MCF 10A (cell line): ENCODE measurements at regions of chr5 and their contacts with region 1.

Region 1: GRCh38 chr5:170267431-170268152 is 30.0 kb downstream of the LCP2 start:
- DNase-seq: peak; percentile 90
- H3K4me3 Mint-ChIP-seq: no peak overlapping the region
- H3K27ac Mint-ChIP-seq: no peak overlapping the region
- H3K4me1 Mint-ChIP-seq: peaks cover 6% of the 10 kb centered on the region
- H3K27me3 Mint-ChIP-seq: peaks cover 47% of the 10 kb centered on the region
- CTCF ChIP-seq: peak; percentile 91

Region 2: GRCh38 chr5:170247363-170247762 is 20.2 kb before region 1 on chr5:
- CTCF ChIA-PET with region 1: interaction called, 12 read pairs
- POLR2A ChIA-PET with region 1: interaction called, 7 read pairs
- intact Hi-C with region 1: no loop called
- DNase-seq: no peak
- H3K4me3 Mint-ChIP-seq: no peak overlapping the region
- H3K27ac Mint-ChIP-seq: no peak overlapping the region
- H3K4me1 Mint-ChIP-seq: peaks cover 5% of the 10 kb centered on the region
- H3K27me3 Mint-ChIP-seq: no peaks in the 10 kb centered on the region
- CTCF ChIP-seq: no peak

Region 3: DNA sequence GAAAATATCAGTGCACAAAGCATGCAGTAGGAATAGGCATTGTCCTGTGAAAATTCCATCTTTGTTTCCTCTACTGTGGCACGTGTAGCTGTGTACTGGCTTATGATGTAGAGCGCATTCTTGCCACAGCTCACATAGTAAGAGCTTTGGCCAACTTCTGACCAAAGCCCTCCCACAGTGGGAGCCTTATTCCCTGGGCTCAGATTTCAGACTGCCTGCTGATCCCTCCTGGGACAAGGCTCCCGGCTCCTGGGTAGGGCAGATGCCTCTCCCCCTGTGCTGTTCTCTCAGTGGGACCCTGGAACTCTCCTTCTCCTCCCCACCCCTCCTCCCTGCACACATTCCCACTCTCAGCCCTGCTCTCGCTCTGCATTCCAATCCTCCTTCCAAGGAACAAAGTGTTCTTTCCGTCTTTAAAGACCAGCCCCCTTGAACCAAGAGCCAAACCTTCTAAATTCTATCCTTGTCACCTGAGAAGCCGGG is 12.5 kb after region 1 on chr5:
- CTCF ChIA-PET with region 1: interaction called, 45 read pairs
- POLR2A ChIA-PET with region 1: no interaction called
- intact Hi-C with region 1: no loop called
- DNase-seq: no peak
- H3K4me3 Mint-ChIP-seq: no peak overlapping the region
- H3K27ac Mint-ChIP-seq: no peak overlapping the region
- H3K4me1 Mint-ChIP-seq: no peaks in the 10 kb centered on the region
- H3K27me3 Mint-ChIP-seq: peaks cover 22% of the 10 kb centered on the region
- CTCF ChIP-seq: no peak

Region 4: DNA sequence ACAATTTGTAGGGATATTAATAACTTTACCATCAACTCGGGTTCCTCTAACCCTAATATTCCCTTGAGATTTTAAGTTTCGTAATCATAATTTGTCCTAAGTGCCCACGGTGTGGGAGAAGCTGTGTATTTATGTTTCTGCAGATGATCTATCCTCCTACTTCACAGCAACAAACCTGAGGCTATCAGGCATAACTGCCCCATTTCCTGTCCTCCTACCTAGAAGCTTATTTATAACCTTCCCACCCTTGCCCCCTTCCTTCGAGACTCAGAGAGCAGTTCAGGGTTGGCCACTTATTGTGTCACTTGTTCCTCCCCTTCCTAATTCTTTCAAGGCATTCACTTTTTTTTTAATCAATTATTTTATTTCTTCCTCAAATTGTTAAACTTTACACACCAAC is 59.6 kb after region 1 on chr5:
- CTCF ChIA-PET with region 1: interaction called, 11 read pairs
- POLR2A ChIA-PET with region 1: no interaction called
- intact Hi-C with region 1: no loop called
- DNase-seq: no peak
- H3K4me3 Mint-ChIP-seq: no peak overlapping the region
- H3K27ac Mint-ChIP-seq: no peak overlapping the region
- H3K4me1 Mint-ChIP-seq: peaks cover 8% of the 10 kb centered on the region
- H3K27me3 Mint-ChIP-seq: no peaks in the 10 kb centered on the region
- CTCF ChIP-seq: no peak

Region 5: DNA sequence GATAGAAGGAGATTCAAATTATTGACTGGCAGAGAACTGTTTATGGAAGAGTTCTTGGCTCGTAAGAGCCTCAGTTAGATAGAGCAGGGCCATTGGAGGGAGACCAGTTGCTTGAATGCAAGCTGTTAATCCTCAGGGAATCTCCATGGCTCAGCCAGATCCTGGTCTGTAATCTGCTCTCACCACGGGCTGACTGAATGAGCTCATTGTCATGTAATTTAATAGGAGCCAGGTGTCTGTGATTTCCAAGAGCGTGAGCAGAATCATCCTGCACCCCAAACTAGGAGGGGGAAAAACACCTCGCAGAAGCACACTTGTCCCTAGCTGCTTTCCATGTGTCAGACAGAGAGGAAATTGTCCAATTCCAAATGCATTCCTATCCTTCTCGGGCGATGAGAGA is 140.6 kb after region 1 on chr5:
- CTCF ChIA-PET with region 1: interaction called, 17 read pairs
- POLR2A ChIA-PET with region 1: interaction called, 5 read pairs
- intact Hi-C with region 1: no loop called
- DNase-seq: no peak
- H3K4me3 Mint-ChIP-seq: no peak overlapping the region
- H3K27ac Mint-ChIP-seq: no peak overlapping the region
- H3K4me1 Mint-ChIP-seq: no peaks in the 10 kb centered on the region
- H3K27me3 Mint-ChIP-seq: peaks cover 20% of the 10 kb centered on the region
- CTCF ChIP-seq: no peak

Region 6: GRCh38 chr5:170451747-170452365 is 184.3 kb after region 1 on chr5:
- CTCF ChIA-PET with region 1: no interaction called
- POLR2A ChIA-PET with region 1: no interaction called
- intact Hi-C with region 1: no loop called
- DNase-seq: peak; percentile 95
- H3K4me3 Mint-ChIP-seq: no peak overlapping the region
- H3K27ac Mint-ChIP-seq: no peak overlapping the region
- H3K4me1 Mint-ChIP-seq: peaks cover 9% of the 10 kb centered on the region
- H3K27me3 Mint-ChIP-seq: no peaks in the 10 kb centered on the region
- CTCF ChIP-seq: no peak

Region 7: GRCh38 chr5:170623576-170624181 is 356.1 kb after region 1 on chr5:
- CTCF ChIA-PET with region 1: interaction called, 11 read pairs
- POLR2A ChIA-PET with region 1: no interaction called
- intact Hi-C with region 1: loop called (anchors 1 kb)
- DNase-seq: peak; percentile 78
- H3K4me3 Mint-ChIP-seq: no peak overlapping the region
- H3K27ac Mint-ChIP-seq: no peak overlapping the region
- H3K4me1 Mint-ChIP-seq: no peaks in the 10 kb centered on the region
- H3K27me3 Mint-ChIP-seq: peaks cover 27% of the 10 kb centered on the region
- CTCF ChIP-seq: peak; percentile 97